ENCODE measurements at regions of chr13 and their contacts with region 1.

Region 1: DNA sequence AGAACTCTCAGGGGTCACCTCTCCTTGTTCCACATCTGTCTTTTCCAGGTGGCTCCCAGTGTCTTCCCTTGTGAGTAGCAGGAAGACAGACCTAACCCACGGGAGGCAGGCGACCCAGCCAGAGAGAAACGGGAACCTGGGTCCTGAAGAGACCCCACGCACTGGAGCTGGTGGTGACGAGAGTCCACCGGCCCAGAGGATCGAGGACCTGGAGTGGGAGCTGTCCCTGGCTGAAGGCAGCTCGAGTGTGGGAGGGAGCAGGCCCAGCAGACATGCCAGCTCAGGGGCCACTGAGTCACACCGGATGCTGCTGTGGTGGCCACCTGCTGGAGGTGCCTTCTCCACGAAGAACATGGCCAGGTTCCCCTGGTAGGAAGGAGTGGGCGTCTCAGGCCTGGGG is 66.5 kb upstream of the ATP12A start:
- DNase-seq: no peak
- ATAC-seq: no peak
- H3K4me3 Mint-ChIP-seq: no peak overlapping the region
- H3K27ac Mint-ChIP-seq: no peak overlapping the region
- H3K4me1 Mint-ChIP-seq: peaks cover 18% of the 10 kb centered on the region
- H3K27me3 Mint-ChIP-seq: no peaks in the 10 kb centered on the region; the same call in 1 of the 2 replicates
- CTCF ChIP-seq: no peak

Region 2: DNA sequence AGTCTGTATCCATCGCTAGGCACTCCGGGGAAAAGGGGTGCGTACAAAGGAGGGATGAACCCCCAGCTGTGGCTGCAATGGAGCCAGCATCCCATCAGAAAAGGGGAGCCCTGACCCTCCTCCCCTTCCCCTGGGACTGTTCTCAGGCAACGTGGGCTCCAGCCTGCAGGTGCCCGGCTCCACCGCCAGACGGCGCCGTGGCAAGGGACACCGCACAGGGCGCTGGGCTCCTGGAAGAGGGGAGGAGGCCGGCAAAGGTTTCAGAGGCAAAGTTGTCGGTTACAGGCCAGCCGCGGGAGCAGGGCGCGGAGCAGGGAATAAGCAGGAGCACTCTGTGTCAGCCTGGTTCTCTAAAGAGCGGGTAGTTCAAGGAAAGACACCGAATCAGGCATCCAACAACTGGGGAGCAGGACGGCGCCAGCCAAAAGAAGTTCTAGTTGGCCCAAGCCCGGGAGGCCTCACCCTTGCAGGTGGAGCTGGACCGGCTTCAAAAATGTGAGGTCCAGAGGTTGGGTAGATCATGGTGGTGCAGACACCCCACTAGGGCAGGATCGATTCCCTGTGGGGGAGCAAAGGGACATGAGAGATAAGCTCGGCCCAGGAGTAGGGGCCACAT is 13.5 kb after region 1 on chr13:
- CTCF ChIA-PET with region 1: interaction called, 10 read pairs
- POLR2A ChIA-PET with region 1: no interaction called
- DNase-seq: peak; percentile 88
- ATAC-seq: peak; percentile 93
- H3K4me3 Mint-ChIP-seq: no peak overlapping the region
- H3K27ac Mint-ChIP-seq: no peak overlapping the region
- H3K4me1 Mint-ChIP-seq: peaks cover 41% of the 10 kb centered on the region
- H3K27me3 Mint-ChIP-seq: no peaks in the 10 kb centered on the region; the same call in 1 of the 2 replicates
- CTCF ChIP-seq: peak; percentile 97

Region 3: DNA sequence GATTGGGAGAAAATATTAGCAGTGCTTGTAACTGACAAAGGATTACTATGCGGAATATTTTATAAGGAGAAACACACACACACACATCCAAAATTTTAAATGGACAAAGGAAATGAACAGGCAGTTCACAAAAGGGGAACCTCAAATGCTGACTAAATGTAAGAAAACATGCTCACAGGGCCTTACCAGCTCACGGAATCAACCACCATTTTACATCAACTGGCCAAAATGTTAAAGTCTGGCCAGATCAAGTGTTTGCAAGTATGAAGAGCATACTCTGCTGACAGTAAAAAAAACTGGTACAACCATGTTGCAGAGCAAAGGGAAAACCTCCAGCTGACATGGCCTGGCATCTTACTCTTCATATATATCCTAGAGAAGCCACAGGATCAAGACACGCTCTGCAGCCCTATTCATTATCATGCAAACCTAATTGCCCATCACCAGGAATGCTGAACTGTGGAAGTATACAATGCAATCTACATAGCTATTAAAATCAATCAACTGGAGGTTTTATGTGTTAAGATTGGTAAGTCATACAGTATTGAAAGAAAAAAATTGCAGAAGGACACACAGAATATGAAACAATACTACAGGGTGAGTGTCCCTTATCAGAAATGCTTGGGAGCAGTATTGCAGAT is 274.7 kb after region 1 on chr13:
- CTCF ChIA-PET with region 1: no interaction called
- POLR2A ChIA-PET with region 1: no interaction called
- DNase-seq: no peak
- ATAC-seq: no peak; the same call in 1 of the 2 replicates
- H3K4me3 Mint-ChIP-seq: no peak overlapping the region
- H3K27ac Mint-ChIP-seq: peak overlapping the region; percentile 65; the same call in 1 of the 2 replicates
- H3K4me1 Mint-ChIP-seq: peaks cover 14% of the 10 kb centered on the region
- H3K27me3 Mint-ChIP-seq: no peaks in the 10 kb centered on the region
- CTCF ChIP-seq: no peak